Gastrocnemius medialis (tissue), 4 donors: ENCODE measurements at regions of chr12 and their contacts with region 1.

Region 1: GRCh38 chr12:68565375-68565903 is 45.3 kb upstream of the RAP1B start:
- DNase-seq: no peak
- ATAC-seq: no peak
- H3K4me3 ChIP-seq: no peak overlapping the region
- H3K27ac ChIP-seq: no peak overlapping the region
- H3K4me1 ChIP-seq: no peaks in the 10 kb centered on the region
- H3K27me3 ChIP-seq: no peaks in the 10 kb centered on the region
- CTCF ChIP-seq: no peak
- POLR2A ChIP-seq: no peak

Region 2: DNA sequence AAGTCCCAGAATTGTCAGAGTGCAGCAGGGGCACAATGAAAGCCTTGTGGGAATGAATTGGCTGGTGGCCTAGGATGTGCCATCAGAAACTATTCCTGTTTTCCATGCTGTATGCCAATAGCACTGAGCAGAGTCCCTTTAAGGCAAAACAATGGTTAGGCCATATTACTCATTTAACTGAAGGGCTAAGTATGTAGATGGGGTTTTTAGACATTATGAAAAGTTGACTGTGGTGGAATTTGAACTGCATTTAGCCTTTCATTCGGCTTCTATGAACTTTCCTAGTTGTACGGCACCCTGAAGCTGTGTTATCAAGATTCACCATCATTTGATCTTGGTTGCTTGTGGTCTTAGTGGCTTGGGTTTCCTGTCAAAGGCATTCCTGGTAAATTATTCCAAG is 364.6 kb before region 1 on chr12:
- in situ Hi-C with region 1: no loop called
- intact Hi-C with region 1: loop called (anchors 5 kb)
- DNase-seq: no peak
- ATAC-seq: no peak
- H3K4me3 ChIP-seq: no peak overlapping the region
- H3K27ac ChIP-seq: no peak overlapping the region
- H3K4me1 ChIP-seq: no peaks in the 10 kb centered on the region
- H3K27me3 ChIP-seq: no peaks in the 10 kb centered on the region
- CTCF ChIP-seq: no peak
- POLR2A ChIP-seq: no peak

Region 3: GRCh38 chr12:68303850-68304249 is 261.6 kb before region 1 on chr12:
- in situ Hi-C with region 1: no loop called
- intact Hi-C with region 1: no loop called
- DNase-seq: peak in 1 of 2 donors; percentile 5
- ATAC-seq: peak in 1 of 2 donors; percentile 39
- H3K4me3 ChIP-seq: no peak overlapping the region
- H3K27ac ChIP-seq: no peak overlapping the region
- H3K4me1 ChIP-seq: no peaks in the 10 kb centered on the region
- H3K27me3 ChIP-seq: no peaks in the 10 kb centered on the region
- CTCF ChIP-seq: no peak
- POLR2A ChIP-seq: no peak

Region 4: DNA sequence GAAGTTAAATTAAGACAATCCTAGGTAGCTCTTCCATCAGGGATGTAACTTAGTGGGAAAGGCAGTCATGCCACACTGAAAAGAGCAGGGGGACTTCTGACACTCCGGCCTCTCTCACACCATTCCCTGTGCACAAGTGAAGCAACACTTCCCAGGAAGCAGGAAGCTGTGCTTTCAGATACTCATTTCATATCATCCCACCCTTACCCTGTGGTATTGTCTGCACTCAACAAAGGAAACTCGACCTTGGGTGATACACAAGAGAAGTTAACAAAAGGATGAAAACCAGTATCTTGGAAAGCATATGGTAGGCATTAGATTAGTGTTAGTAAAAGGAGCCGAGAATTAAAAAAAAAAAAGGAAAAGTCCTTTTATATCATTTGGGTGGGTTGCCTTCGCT is 172.0 kb before region 1 on chr12:
- in situ Hi-C with region 1: no loop called
- intact Hi-C with region 1: no loop called
- DNase-seq: no peak
- ATAC-seq: no peak
- H3K4me3 ChIP-seq: no peak overlapping the region
- H3K27ac ChIP-seq: no peak overlapping the region
- H3K4me1 ChIP-seq: no peaks in the 10 kb centered on the region
- H3K27me3 ChIP-seq: no peaks in the 10 kb centered on the region
- CTCF ChIP-seq: no peak
- POLR2A ChIP-seq: no peak

Region 5: DNA sequence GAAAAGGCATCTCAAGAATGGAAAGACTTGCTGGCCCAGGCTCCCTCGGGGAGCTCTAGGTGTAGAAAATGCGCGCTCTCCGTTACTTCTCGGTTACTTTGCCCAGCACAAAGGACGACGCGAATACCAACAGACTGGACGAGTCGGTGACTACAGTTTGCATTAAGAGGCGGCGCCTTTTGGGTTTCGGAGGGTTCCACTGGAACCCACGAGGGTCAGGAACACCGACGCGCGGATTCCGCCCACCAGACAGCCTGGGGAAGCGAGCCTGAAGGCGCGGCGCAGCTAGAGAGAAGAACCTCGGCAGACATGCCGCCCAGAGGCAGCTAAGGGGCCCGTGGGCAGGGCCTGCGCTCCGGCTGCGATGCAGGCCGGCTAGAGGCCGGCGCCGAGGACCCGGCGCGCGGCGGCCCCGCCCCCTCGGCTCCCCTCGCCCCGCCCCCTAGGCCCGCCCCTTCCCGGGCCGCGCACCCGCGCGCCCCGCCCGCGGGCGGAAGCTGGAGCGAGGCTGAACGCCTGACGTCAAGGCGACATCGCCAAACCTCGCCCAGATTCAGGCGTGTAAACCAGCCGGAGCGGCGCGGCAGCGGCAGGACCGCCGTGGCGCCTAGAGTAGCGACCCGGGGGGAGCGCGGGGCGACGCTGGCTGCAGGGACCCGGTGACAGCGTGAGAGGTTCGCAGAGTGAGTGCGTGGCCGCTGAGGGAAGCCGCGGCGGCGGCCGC is 45.1 kb after region 1 on chr12 and contains the start of gene RAP1B:
- in situ Hi-C with region 1: no loop called
- intact Hi-C with region 1: no loop called
- DNase-seq: peak; percentile 77 to 88
- ATAC-seq: peak; percentile 91 to 92
- H3K4me3 ChIP-seq: peak within 1 kb of the TSS; percentile 82 to 99 (median 94)
- H3K27ac ChIP-seq: peak within 1 kb of the TSS; percentile 97 to 99 (median 98)
- H3K4me1 ChIP-seq: peaks cover 34 to 39% of the 10 kb centered on the region in 2 donors
- H3K27me3 ChIP-seq: no peaks in the 10 kb centered on the region
- CTCF ChIP-seq: no peak
- POLR2A ChIP-seq: peak; percentile 94
- total RNA-seq, gene RAP1B: 58.4 to 93.8 (median 71.9) TPM

Region 6: GRCh38 chr12:68665016-68665569 is 99.7 kb after region 1 on chr12:
- in situ Hi-C with region 1: loop called in 1 of 4 experiments (anchors 25 kb)
- intact Hi-C with region 1: no loop called
- DNase-seq: no peak
- ATAC-seq: peak in 1 of 2 donors; percentile 64
- H3K4me3 ChIP-seq: no peak overlapping the region
- H3K27ac ChIP-seq: no peak overlapping the region
- H3K4me1 ChIP-seq: peaks cover 0 to 8% of the 10 kb centered on the region in 2 donors
- H3K27me3 ChIP-seq: no peaks in the 10 kb centered on the region
- CTCF ChIP-seq: no peak
- POLR2A ChIP-seq: no peak